A549 (cell line): ENCODE measurements at regions of chr3 and their contacts with region 1.

Region 1: DNA sequence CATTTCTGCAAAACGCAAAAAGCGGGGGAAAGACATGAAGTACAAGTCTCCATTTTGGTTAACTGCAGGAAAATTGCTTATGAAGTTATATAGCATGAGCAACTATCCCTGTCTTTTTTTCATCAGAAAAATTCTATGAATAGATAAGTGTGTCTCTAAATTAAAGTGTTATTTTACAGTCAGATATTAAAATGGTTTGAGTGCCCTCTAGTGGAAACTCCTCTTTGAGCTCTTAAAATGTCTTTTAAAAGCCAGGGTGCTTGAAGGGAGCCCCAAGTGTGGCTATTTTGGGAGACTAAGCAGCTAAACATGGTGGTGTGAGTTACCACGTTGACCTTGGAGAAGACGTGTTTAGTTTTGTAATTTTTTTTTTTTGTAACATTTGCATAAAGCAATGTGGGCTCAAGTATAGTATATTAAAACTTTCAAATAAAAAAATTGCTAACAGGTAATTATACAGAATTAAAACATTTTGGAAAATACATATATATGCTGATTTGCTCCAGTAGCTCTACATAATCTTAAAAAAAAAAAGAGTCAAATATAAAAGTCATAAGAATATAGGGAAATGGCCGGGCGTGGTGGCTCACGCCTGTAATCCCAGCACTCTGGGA is 77.2 kb downstream of the PPP2R3A start:
- DNase-seq: peak; percentile 19 to 37
- ATAC-seq: peak; percentile 47 to 65; a peak in 4 of 6 replicates
- H3K4me3 ChIP-seq: no peak overlapping the region
- H3K27ac ChIP-seq: no peak overlapping the region
- H3K4me1 ChIP-seq: no peaks in the 10 kb centered on the region
- CTCF ChIP-seq: peak; percentile 66
- EP300 ChIP-seq: no peak
- POLR2A ChIP-seq: no peak
- RAD21 ChIP-seq: peak; percentile 71 to 74

Region 2: DNA sequence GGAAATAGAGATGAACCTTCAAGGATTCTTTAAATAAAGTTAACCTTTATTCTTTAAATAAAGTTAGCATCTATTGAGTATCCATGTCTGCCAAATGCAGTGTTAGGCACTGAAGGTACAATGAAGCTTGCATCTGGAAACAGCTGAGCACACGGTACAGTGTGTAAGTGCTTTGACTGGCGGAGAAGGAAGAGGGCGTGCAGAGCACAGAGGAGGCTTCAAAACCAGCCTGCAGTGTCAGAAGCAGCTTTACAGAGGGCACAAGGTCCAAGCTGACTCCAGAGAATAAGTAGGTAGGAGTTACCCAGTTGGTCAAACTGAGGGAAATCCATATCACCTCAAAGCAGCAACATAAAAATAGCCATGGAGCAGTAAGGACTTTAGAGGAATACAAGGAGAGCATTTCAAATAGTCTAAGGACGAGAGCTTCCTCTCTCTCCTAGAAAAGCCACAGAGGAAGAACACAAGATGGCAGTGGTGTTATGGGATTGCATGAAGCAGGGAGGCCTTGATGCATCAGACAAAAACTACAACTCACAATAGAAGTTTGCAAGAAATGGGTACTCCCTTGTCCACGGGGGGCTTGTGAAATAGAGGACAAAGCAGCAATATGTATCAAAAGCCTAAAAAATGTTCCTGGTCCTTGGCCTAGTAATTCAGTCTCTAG is 137.5 kb before region 1 on chr3:
- CTCF ChIA-PET with region 1: interaction called, 27 read pairs
- POLR2A ChIA-PET with region 1: no interaction called
- DNase-seq: peak in 1 of 2 experiments; percentile 16
- ATAC-seq: peak in 1 of 2 experiments; percentile 38; a peak in 1 of 6 replicates
- H3K4me3 ChIP-seq: no peak overlapping the region
- H3K27ac ChIP-seq: no peak overlapping the region
- H3K4me1 ChIP-seq: no peaks in the 10 kb centered on the region
- CTCF ChIP-seq: no peak
- EP300 ChIP-seq: no peak
- POLR2A ChIP-seq: no peak
- RAD21 ChIP-seq: peak in 1 of 2 experiments; percentile 41; a peak in 2 of 5 replicates

Region 3: DNA sequence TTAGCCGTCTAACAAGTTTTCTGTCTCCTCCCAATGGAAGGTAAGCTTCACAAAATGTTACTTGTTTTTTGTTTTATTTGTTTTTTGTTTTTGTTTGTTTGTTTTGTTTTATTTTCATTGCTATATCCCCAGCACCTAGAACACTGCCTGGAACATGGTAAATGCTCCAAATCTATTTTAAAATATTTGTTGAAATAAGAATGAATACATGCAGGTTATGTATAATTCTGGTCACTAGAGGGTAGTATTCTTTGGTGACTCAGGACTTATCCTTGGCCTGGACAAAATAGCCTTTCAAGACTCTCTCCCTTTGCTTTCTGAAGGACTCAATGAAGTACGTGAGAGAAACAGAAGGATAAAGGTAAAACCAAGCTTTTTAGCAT is 124.1 kb before region 1 on chr3:
- CTCF ChIA-PET with region 1: interaction called, 112 read pairs
- POLR2A ChIA-PET with region 1: no interaction called
- DNase-seq: peak in 1 of 2 experiments; percentile 27
- ATAC-seq: peak; percentile 54 to 71; a peak in 4 of 6 replicates
- H3K4me3 ChIP-seq: no peak overlapping the region
- H3K27ac ChIP-seq: no peak overlapping the region
- H3K4me1 ChIP-seq: no peaks in the 10 kb centered on the region
- CTCF ChIP-seq: peak; percentile 47
- EP300 ChIP-seq: no peak
- POLR2A ChIP-seq: no peak
- RAD21 ChIP-seq: peak; percentile 39 to 42; a peak in 3 of 5 replicates